Sigmoid colon (tissue), 7 donors: ENCODE measurements at regions of chr17 and their contacts with region 1.

Region 1: GRCh38 chr17:8118769-8119580 is 661 bp upstream of the ALOXE3 start:
- DNase-seq: peak; percentile 96
- H3K4me3 ChIP-seq: peak overlapping the region; percentile 40 to 59 (median 53)
- H3K27ac ChIP-seq: peak overlapping the region; percentile 76 to 87 (median 80)
- H3K4me1 ChIP-seq: peaks cover 0 to 57% (median 54%) of the 10 kb centered on the region in 4 donors
- H3K27me3 ChIP-seq: peaks cover 12 to 78% (median 71%) of the 10 kb centered on the region in 3 donors
- CTCF ChIP-seq: peak; percentile 90 to 95 (median 90)
- EP300 ChIP-seq: no peak
- POLR2A ChIP-seq: no peak

Region 2: GRCh38 chr17:8079291-8080207 is 39.4 kb before region 1 on chr17:
- intact Hi-C with region 1: loop called (anchors 5 kb)
- DNase-seq: peak; percentile 83
- H3K4me3 ChIP-seq: peak overlapping the region in 3 of 4 donors; percentile 36 to 45 (median 40)
- H3K27ac ChIP-seq: peak overlapping the region in 1 of 4 donors; percentile 18
- H3K4me1 ChIP-seq: peaks cover 0 to 15% (median 11%) of the 10 kb centered on the region in 4 donors
- H3K27me3 ChIP-seq: peaks cover 6 to 95% (median 55%) of the 10 kb centered on the region in 3 donors
- CTCF ChIP-seq: peak; percentile 47 to 95 (median 68)
- EP300 ChIP-seq: no peak
- POLR2A ChIP-seq: no peak

Region 3: DNA sequence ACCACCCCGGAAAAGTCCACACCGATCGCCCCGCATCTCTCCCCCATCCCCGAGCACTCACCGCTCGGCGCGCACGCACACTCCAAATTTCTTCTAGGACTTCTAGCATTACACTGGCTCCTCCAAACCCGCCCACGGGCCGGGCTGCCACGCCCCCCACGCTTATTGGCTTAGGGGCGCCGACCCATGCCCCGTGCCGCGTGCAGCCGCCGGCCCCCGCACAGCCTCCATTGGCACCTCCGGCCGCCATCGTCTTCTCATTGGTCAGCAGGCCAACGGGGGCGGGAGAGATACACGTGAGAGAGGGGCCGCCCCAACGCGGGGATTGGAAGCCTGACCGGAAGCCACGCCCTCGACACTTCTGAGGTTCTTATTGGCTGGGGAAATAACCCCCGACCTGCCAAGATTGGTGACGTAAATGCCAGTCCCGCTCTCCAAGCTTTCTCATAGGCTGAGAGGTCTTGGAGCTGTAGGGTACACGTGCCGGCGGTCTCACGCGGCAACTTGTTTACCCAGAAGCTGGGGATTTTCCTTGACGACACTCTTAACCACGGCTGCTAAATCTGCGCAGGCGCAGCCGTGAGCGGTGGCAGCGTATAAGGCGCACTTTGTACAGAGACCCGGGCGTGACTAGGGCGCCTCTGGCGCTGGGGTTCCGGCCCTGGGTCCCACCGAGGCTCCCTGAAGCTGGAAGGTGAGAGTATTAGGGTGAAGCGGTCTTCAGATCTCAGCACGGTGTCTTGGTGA is 37.4 kb after region 1 on chr17:
- intact Hi-C with region 1: loop called (anchors 1 kb)
- DNase-seq: peak; percentile 100
- H3K4me3 ChIP-seq: peak overlapping the region; percentile 93 to 97 (median 96)
- H3K27ac ChIP-seq: peak overlapping the region; percentile 99 to 100 (median 100)
- H3K4me1 ChIP-seq: peaks cover 0 to 58% (median 54%) of the 10 kb centered on the region in 4 donors
- H3K27me3 ChIP-seq: no peaks in the 10 kb centered on the region
- CTCF ChIP-seq: no peak
- EP300 ChIP-seq: peak; percentile 59 to 98 (median 77)
- POLR2A ChIP-seq: peak; percentile 100

Region 4: GRCh38 chr17:8222630-8223356 is 103.8 kb after region 1 on chr17:
- intact Hi-C with region 1: loop called (anchors 1 kb)
- DNase-seq: peak; percentile 98
- H3K4me3 ChIP-seq: peak overlapping the region; percentile 45 to 71 (median 66)
- H3K27ac ChIP-seq: peak overlapping the region; percentile 95 to 98 (median 96)
- H3K4me1 ChIP-seq: peaks cover 0 to 42% (median 23%) of the 10 kb centered on the region in 4 donors
- H3K27me3 ChIP-seq: no peaks in the 10 kb centered on the region
- CTCF ChIP-seq: no peak
- EP300 ChIP-seq: peak in 1 of 4 donors; percentile 45
- POLR2A ChIP-seq: peak; percentile 57 to 80

Region 5: DNA sequence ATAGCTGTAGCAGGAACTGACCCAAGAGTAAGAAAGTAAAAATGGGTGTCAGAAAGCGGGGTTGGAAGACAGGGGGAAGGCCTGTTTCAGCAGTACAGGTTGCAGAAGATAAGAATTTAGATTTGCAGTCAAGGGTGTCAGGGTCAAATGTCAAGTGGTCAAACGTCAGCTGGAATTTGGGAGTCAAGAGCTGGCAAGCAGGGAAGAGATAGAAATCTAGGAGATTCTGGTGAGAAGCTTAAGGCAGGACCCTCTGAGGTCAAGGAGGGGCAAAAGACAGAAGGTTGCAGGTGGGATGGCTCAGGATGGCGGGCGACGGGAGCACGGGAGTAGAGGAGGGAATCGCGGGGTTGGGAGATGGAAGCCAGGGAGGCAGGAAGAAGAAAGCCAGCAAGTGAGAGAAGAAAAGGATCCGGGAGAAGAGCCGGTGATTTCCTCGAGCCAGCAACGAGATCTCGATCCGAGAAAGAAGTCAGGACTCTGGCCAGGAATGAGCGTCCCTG is 175.9 kb after region 1 on chr17:
- intact Hi-C with region 1: loop called (anchors 5 kb)
- DNase-seq: no peak
- H3K4me3 ChIP-seq: peak overlapping the region; percentile 53 to 78 (median 63)
- H3K27ac ChIP-seq: peak overlapping the region; percentile 90 to 95 (median 92)
- H3K4me1 ChIP-seq: peaks cover 0 to 13% (median 10%) of the 10 kb centered on the region in 4 donors
- H3K27me3 ChIP-seq: no peaks in the 10 kb centered on the region
- CTCF ChIP-seq: no peak
- EP300 ChIP-seq: no peak
- POLR2A ChIP-seq: no peak